ENCODE measurements at regions of chr2 and their contacts with region 1.

Region 1: GRCh38 chr2:156476850-156477206 is 40.6 kb downstream of the GPD2 start:
- DNase-seq: no peak
- H3K4me3 ChIP-seq: no peak overlapping the region
- H3K27ac ChIP-seq: no peak overlapping the region
- H3K4me1 ChIP-seq: peaks cover 0 to 20% (median 4%) of the 10 kb centered on the region in 4 donors
- H3K27me3 ChIP-seq: no peaks in the 10 kb centered on the region
- CTCF ChIP-seq: no peak
- EP300 ChIP-seq: no peak
- POLR2A ChIP-seq: no peak

Region 2: DNA sequence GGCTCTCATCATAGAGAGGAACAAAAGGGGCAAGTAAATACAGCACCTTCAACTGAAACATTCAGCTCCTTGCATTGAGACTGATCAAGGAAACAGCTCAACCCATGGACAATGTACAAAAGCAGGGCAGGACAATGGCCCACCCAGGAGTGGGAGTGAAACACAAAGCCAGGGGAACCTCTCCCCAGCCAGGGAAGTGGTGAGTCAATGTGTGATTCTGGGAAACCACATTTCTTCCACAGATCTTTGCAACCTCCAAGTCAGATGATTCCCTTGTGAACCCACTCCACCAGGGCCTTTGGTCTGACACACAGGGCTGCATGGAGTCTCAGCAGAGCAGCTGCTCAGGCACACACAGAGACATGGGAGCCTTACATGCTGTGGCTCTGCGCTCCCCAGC is 438.8 kb before region 1 on chr2:
- in situ Hi-C with region 1: no loop called
- intact Hi-C with region 1: no loop called
- DNase-seq: no peak
- H3K4me3 ChIP-seq: no peak overlapping the region
- H3K27ac ChIP-seq: no peak overlapping the region
- H3K4me1 ChIP-seq: no peaks in the 10 kb centered on the region
- H3K27me3 ChIP-seq: no peaks in the 10 kb centered on the region
- CTCF ChIP-seq: no peak
- EP300 ChIP-seq: no peak
- POLR2A ChIP-seq: no peak

Region 3: GRCh38 chr2:156443089-156443488 is 33.7 kb before region 1 on chr2:
- in situ Hi-C with region 1: no loop called
- intact Hi-C with region 1: loop called (anchors 2 kb)
- DNase-seq: no peak
- H3K4me3 ChIP-seq: no peak overlapping the region
- H3K27ac ChIP-seq: no peak overlapping the region
- H3K4me1 ChIP-seq: peaks cover 0 to 17% (median 9%) of the 10 kb centered on the region in 4 donors
- H3K27me3 ChIP-seq: no peaks in the 10 kb centered on the region
- CTCF ChIP-seq: no peak
- EP300 ChIP-seq: no peak
- POLR2A ChIP-seq: no peak

Region 4: GRCh38 chr2:156518138-156518537 is 41.3 kb after region 1 on chr2:
- in situ Hi-C with region 1: no loop called
- intact Hi-C with region 1: loop called (anchors 2 kb)
- DNase-seq: no peak
- H3K4me3 ChIP-seq: no peak overlapping the region
- H3K27ac ChIP-seq: no peak overlapping the region
- H3K4me1 ChIP-seq: no peaks in the 10 kb centered on the region
- H3K27me3 ChIP-seq: no peaks in the 10 kb centered on the region
- CTCF ChIP-seq: no peak
- EP300 ChIP-seq: no peak
- POLR2A ChIP-seq: no peak

Measured in transverse colon (tissue), 4 donors.